Activated CD8-positive, alpha-beta T cell treated with anti-CD3 and anti-CD28 coated beads, Interleukin-2, amount 10 ng/mL, durations not matched to agents 7 days and 5 days (primary cell): ENCODE measurements at regions of chr3 and their contacts with region 1.

Region 1: GRCh38 chr3:12984023-12984823 is 89.0 kb downstream of the IQSEC1 start:
- DNase-seq: peak; percentile 76
- ATAC-seq: peak; percentile 88
- H3K4me3 Mint-ChIP-seq: no peak overlapping the region
- H3K27ac Mint-ChIP-seq: no peak overlapping the region
- H3K4me1 Mint-ChIP-seq: peaks cover 42% of the 10 kb centered on the region
- H3K27me3 Mint-ChIP-seq: no peaks in the 10 kb centered on the region

Region 2: GRCh38 chr3:12868039-12869034 is 115.9 kb before region 1 on chr3:
- CTCF ChIA-PET with region 1: interaction called, 14 read pairs
- POLR2A ChIA-PET with region 1: no interaction called
- DNase-seq: peak; percentile 65
- ATAC-seq: peak; percentile 81
- H3K4me3 Mint-ChIP-seq: peak overlapping the region; percentile 50
- H3K27ac Mint-ChIP-seq: no peak overlapping the region
- H3K4me1 Mint-ChIP-seq: peaks cover 22% of the 10 kb centered on the region
- H3K27me3 Mint-ChIP-seq: peaks cover 26% of the 10 kb centered on the region

Region 3: GRCh38 chr3:12901623-12902045 is 82.6 kb before region 1 on chr3:
- CTCF ChIA-PET with region 1: interaction called, 22 read pairs
- POLR2A ChIA-PET with region 1: no interaction called
- DNase-seq: no peak
- ATAC-seq: no peak
- H3K4me3 Mint-ChIP-seq: no peak overlapping the region
- H3K27ac Mint-ChIP-seq: peak overlapping the region; percentile 4
- H3K4me1 Mint-ChIP-seq: peaks cover 14% of the 10 kb centered on the region
- H3K27me3 Mint-ChIP-seq: no peaks in the 10 kb centered on the region

Region 4: GRCh38 chr3:12959838-12960378 is 24.3 kb before region 1 on chr3:
- CTCF ChIA-PET with region 1: interaction called, 15 read pairs
- POLR2A ChIA-PET with region 1: interaction called, 3 read pairs
- DNase-seq: no peak
- ATAC-seq: no peak
- H3K4me3 Mint-ChIP-seq: no peak overlapping the region
- H3K27ac Mint-ChIP-seq: no peak overlapping the region
- H3K4me1 Mint-ChIP-seq: peaks cover 63% of the 10 kb centered on the region
- H3K27me3 Mint-ChIP-seq: no peaks in the 10 kb centered on the region

Region 5: DNA sequence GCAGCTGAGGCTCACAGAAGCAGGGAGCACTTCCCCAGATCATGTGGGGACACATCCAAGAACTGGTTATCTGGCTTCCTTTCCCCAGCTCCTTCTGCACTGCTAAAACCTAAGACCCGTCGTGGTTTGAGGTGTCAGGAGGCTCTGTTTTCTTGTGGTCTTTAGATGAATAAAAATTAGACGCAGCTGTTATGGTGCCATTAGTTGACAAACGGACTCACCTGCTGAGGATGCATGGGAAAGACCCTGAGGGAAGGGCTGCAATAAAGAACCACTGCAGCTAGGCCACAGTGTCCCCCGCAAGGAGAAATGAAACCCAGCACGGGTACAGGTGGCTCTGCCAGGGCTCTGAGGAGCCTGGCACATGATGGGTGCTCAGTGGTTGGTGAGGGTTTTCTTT is 10.4 kb before region 1 on chr3:
- CTCF ChIA-PET with region 1: interaction called, 15 read pairs
- POLR2A ChIA-PET with region 1: interaction called, 3 read pairs
- DNase-seq: no peak
- ATAC-seq: no peak
- H3K4me3 Mint-ChIP-seq: no peak overlapping the region
- H3K27ac Mint-ChIP-seq: no peak overlapping the region
- H3K4me1 Mint-ChIP-seq: peaks cover 18% of the 10 kb centered on the region
- H3K27me3 Mint-ChIP-seq: no peaks in the 10 kb centered on the region

Region 6: DNA sequence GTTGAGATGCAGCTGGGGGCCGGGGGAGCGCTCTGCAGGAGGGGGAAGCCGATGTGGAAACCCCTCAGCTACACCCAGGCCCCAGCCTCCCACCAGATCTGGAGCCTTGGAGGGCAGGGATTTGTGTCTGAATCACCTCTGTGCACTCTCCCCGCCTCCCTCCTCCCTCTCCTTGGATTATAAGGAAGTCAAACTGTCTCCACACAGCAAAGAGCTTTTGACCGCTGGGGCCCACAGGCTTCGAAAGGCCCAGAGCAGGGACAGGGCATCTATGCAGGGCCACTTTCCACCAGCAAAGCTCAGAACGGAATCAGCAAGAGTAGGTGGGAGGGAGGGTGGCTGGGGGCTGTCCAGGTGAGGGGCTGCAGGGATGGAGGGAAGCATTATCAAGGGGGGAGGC is 20.2 kb after region 1 on chr3:
- CTCF ChIA-PET with region 1: interaction called, 13 read pairs
- POLR2A ChIA-PET with region 1: no interaction called
- DNase-seq: no peak
- ATAC-seq: no peak
- H3K4me3 Mint-ChIP-seq: no peak overlapping the region
- H3K27ac Mint-ChIP-seq: no peak overlapping the region
- H3K4me1 Mint-ChIP-seq: peaks cover 85% of the 10 kb centered on the region
- H3K27me3 Mint-ChIP-seq: no peaks in the 10 kb centered on the region

Region 7: GRCh38 chr3:13098192-13098988 is 114.2 kb after region 1 on chr3:
- CTCF ChIA-PET with region 1: no interaction called
- POLR2A ChIA-PET with region 1: no interaction called
- DNase-seq: no peak
- ATAC-seq: no peak
- H3K4me3 Mint-ChIP-seq: no peak overlapping the region
- H3K27ac Mint-ChIP-seq: no peak overlapping the region
- H3K4me1 Mint-ChIP-seq: peaks cover 8% of the 10 kb centered on the region
- H3K27me3 Mint-ChIP-seq: peaks cover 21% of the 10 kb centered on the region

Region 8: DNA sequence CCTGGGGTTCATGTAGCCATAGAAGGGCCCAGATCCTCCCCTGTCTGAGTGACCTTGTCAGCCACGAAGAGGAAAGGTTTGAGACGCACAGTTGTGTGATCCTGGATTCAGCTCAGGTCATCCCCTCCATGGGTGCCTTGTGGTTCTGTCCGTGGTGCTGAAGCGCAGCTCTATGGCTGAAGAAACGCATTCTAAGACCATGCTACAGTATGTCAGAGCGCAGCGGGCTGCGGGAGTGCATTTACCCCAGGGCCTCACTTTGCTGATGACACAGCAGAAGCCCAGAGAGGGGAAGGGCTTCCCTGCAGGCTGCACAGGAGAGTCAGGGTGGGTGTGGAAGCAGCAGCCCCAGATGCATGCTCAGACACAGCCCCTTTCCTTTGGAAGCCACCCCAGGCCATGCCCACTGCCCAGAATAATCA is 157.8 kb after region 1 on chr3:
- CTCF ChIA-PET with region 1: no interaction called
- POLR2A ChIA-PET with region 1: no interaction called
- DNase-seq: peak; percentile 67
- ATAC-seq: peak; percentile 73
- H3K4me3 Mint-ChIP-seq: no peak overlapping the region
- H3K27ac Mint-ChIP-seq: no peak overlapping the region
- H3K4me1 Mint-ChIP-seq: no peaks in the 10 kb centered on the region
- H3K27me3 Mint-ChIP-seq: no peaks in the 10 kb centered on the region